GM12878 (cell line): ENCODE measurements at regions of chr9 and their contacts with region 1.

Region 1: GRCh38 chr9:5437254-5438216 is at the start of gene PLGRKT:
- DNase-seq: peak; percentile 81
- ATAC-seq: peak; percentile 88
- H3K4me3 ChIP-seq: peak within 1 kb of the TSS; percentile 86
- H3K27ac ChIP-seq: peak within 1 kb of the TSS; percentile 96
- H3K4me1 ChIP-seq: peaks cover 7% of the 10 kb centered on the region
- H3K27me3 ChIP-seq: no peaks in the 10 kb centered on the region
- CTCF ChIP-seq: peak; percentile 17 to 31 (median 17); a peak in 3 of 6 replicates
- EP300 ChIP-seq: peak in 1 of 2 experiments; percentile 37; a peak in 1 of 4 replicates
- POLR2A ChIP-seq: peak; percentile 95
- RAD21 ChIP-seq: no peak
- polyA plus RNA-seq, gene PLGRKT: 62.2 to 64.4 TPM

Region 2: DNA sequence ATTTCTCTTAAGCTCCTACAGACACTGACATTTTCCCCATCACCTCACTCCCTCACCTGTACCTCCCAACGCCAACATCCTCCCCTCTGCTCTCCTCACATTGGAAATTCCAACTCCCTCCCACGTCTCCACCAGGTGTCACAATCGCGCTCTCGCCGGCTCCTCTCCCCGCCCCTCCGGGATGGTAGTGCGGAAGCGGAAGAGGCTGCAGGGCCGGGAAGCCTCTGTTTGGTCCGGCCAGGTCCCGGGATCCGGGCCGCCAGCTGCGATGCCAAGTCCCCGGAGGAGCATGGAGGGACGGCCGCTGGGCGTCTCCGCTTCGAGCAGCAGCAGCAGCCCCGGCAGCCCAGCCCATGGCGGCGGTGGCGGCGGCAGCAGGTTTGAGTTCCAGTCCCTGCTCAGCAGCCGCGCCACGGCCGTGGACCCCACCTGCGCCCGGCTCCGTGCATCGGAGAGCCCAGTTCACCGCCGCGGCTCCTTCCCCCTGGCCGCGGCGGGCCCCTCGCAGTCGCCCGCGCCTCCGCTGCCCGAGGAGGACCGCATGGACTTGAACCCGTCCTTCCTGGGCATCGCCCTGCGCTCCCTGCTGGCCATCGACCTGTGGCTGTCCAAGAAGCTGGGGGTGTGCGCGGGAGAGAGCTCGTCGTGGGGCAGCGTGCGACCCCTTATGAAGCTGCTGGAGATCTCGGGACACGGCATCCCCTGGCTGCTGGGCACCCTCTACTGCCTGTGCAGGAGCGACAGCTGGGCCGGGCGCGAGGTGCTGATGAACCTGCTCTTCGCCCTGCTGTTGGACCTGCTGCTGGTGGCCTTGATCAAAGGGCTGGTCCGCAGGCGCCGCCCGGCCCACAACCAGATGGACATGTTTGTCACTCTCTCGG is 775.2 kb before region 1 on chr9 and contains the start of gene PLPP6:
- CTCF ChIA-PET with region 1: no interaction called
- POLR2A ChIA-PET with region 1: no interaction called
- RAD21 ChIA-PET with region 1: no interaction called
- SMC1A ChIA-PET with region 1: no interaction called
- in situ Hi-C with region 1: no loop called
- intact Hi-C with region 1: loop called (anchors 10 kb)
- DNase-seq: peak; percentile 52
- ATAC-seq: peak; percentile 91
- H3K4me3 ChIP-seq: peak within 1 kb of the TSS; percentile 85
- H3K27ac ChIP-seq: peak within 1 kb of the TSS; percentile 68
- H3K4me1 ChIP-seq: peaks cover 21% of the 10 kb centered on the region
- H3K27me3 ChIP-seq: no peaks in the 10 kb centered on the region
- CTCF ChIP-seq: peak; percentile 52 to 85 (median 61)
- EP300 ChIP-seq: no peak
- POLR2A ChIP-seq: peak; percentile 90
- RAD21 ChIP-seq: peak; percentile 65
- polyA plus RNA-seq, gene PLPP6: 1.6 to 3.5 TPM

Region 3: GRCh38 chr9:4750023-4750673 is 687.4 kb before region 1 on chr9:
- CTCF ChIA-PET with region 1: interaction called, 8 read pairs
- POLR2A ChIA-PET with region 1: no interaction called
- RAD21 ChIA-PET with region 1: interaction called, 9 read pairs
- SMC1A ChIA-PET with region 1: no interaction called
- in situ Hi-C with region 1: loop called (anchors 5 kb)
- intact Hi-C with region 1: no loop called
- DNase-seq: no peak
- ATAC-seq: peak; percentile 86
- H3K4me3 ChIP-seq: no peak overlapping the region
- H3K27ac ChIP-seq: no peak overlapping the region
- H3K4me1 ChIP-seq: peaks cover 4% of the 10 kb centered on the region; the same call in 1 of the 2 replicates
- H3K27me3 ChIP-seq: no peaks in the 10 kb centered on the region
- CTCF ChIP-seq: peak; percentile 54 to 59 (median 58); a peak in 5 of 6 replicates
- EP300 ChIP-seq: no peak
- POLR2A ChIP-seq: no peak
- RAD21 ChIP-seq: peak; percentile 72

Region 4: DNA sequence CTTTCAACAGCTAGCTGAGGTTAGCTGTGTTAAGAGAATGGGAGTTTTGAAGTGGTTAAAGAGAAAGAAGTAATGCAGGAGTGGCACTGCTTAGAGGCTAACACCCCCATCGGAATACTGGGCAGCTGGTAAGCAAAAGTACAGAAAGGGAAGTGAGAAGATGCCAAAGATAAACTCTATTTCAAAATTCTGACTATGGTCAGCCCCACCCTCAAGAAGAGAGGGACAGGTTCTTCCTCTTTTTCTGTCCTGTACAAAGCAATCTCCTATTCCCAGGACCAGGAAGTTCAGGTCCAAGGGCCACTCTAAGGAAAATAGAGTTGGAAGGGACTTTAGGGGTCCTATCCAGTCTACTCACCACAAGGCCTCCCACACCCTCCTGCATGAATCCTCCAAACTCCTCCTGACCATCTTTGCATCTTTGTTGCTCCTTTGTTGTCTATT is 498.4 kb before region 1 on chr9:
- CTCF ChIA-PET with region 1: no interaction called
- POLR2A ChIA-PET with region 1: no interaction called
- RAD21 ChIA-PET with region 1: no interaction called
- SMC1A ChIA-PET with region 1: interaction called, 3 read pairs
- in situ Hi-C with region 1: no loop called
- intact Hi-C with region 1: loop called (anchors 5 kb)
- DNase-seq: peak; percentile 93
- ATAC-seq: peak; percentile 92
- H3K4me3 ChIP-seq: no peak overlapping the region
- H3K27ac ChIP-seq: peak overlapping the region; percentile 78
- H3K4me1 ChIP-seq: peaks cover 52% of the 10 kb centered on the region
- H3K27me3 ChIP-seq: no peaks in the 10 kb centered on the region
- CTCF ChIP-seq: no peak
- EP300 ChIP-seq: peak; percentile 83 to 86
- POLR2A ChIP-seq: no peak
- RAD21 ChIP-seq: no peak

Region 5: GRCh38 chr9:5364294-5365024 is 73.1 kb before region 1 on chr9:
- CTCF ChIA-PET with region 1: interaction called, 3 read pairs
- POLR2A ChIA-PET with region 1: interaction called, 6 read pairs
- RAD21 ChIA-PET with region 1: interaction called, 5 read pairs
- SMC1A ChIA-PET with region 1: interaction called, 4 read pairs
- in situ Hi-C with region 1: no loop called
- intact Hi-C with region 1: loop called (anchors 5 kb)
- DNase-seq: peak; percentile 51
- ATAC-seq: peak; percentile 96
- H3K4me3 ChIP-seq: no peak overlapping the region
- H3K27ac ChIP-seq: peak overlapping the region; percentile 44
- H3K4me1 ChIP-seq: peaks cover 15% of the 10 kb centered on the region
- H3K27me3 ChIP-seq: no peaks in the 10 kb centered on the region
- CTCF ChIP-seq: no peak
- EP300 ChIP-seq: peak; percentile 63 to 72; a peak in 3 of 4 replicates
- POLR2A ChIP-seq: no peak
- RAD21 ChIP-seq: no peak

Region 6: DNA sequence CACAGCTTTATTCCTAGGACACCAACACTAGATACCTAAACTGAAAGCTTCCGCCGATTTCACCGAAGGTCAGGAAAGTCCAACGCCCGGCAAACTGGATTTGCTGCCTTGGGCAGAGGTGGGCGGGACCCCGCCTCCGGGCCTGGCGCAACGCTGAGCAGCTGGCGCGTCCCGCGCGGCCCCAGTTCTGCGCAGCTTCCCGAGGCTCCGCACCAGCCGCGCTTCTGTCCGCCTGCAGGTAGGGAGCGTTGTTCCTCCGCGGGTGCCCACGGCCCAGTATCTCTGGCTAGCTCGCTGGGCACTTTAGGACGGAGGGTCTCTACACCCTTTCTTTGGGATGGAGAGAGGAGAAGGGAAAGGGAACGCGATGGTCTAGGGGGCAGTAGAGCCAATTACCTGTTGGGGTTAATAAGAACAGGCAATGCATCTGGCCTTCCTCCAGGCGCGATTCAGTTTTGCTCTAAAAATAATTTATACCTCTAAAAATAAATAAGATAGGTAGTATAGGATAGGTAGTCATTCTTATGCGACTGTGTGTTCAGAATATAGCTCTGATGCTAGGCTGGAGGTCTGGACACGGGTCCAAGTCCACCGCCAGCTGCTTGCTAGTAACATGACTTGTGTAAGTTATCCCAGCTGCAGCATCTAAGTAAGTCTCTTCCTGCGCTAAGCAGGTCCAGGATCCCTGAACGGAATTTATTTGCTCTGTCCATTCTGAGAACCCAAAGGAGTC is 13.0 kb after region 1 on chr9 and contains the start of gene CD274:
- CTCF ChIA-PET with region 1: interaction called, 64 read pairs
- POLR2A ChIA-PET with region 1: interaction called, 66 read pairs
- RAD21 ChIA-PET with region 1: interaction called, 86 read pairs
- SMC1A ChIA-PET with region 1: interaction called, 80 read pairs
- in situ Hi-C with region 1: no loop called
- intact Hi-C with region 1: loop called (anchors 1 kb)
- DNase-seq: no peak
- ATAC-seq: peak; percentile 75
- H3K4me3 ChIP-seq: peak within 1 kb of the TSS; percentile 72
- H3K27ac ChIP-seq: peak within 1 kb of the TSS; percentile 97
- H3K4me1 ChIP-seq: peaks cover 46% of the 10 kb centered on the region
- H3K27me3 ChIP-seq: no peaks in the 10 kb centered on the region
- CTCF ChIP-seq: peak; percentile 57 to 86 (median 81)
- EP300 ChIP-seq: 0 out of 4 replicates have a peak, but pooled peaks of 1 of the 2 experiments have one; percentile 33
- POLR2A ChIP-seq: peak; percentile 95
- RAD21 ChIP-seq: peak; percentile 92
- polyA plus RNA-seq, gene CD274: 9.4 to 12.2 TPM

Region 7: DNA sequence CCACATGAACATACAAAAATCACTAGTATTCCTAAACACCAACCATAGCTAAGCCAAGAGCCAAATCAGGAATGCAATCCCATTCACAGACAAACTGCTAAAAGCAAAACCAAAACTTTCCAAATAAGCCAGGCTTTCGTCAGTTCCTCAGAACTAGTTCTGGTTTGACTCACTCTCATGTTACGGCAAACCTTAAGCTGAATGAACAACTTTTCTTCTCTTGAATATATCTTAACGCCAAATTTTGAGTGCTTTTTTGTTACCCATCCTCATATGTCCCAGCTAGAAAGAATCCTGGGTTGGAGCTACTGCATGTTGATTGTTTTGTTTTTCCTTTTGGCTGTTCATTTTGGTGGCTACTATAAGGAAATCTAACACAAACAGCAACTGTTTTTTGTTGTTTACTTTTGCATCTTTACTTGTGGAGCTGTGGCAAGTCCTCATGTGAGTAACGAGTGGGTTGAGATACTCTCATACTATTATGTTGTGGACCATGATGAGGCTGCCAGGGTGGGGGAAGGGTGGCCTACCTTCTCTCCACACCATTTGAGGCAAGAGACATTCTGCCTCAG is 72.9 kb after region 1 on chr9 and contains the start of gene PDCD1LG2:
- CTCF ChIA-PET with region 1: interaction called, 3 read pairs
- POLR2A ChIA-PET with region 1: interaction called, 12 read pairs
- RAD21 ChIA-PET with region 1: interaction called, 11 read pairs
- SMC1A ChIA-PET with region 1: interaction called, 20 read pairs
- in situ Hi-C with region 1: no loop called
- intact Hi-C with region 1: no loop called
- DNase-seq: peak; percentile 76
- ATAC-seq: peak; percentile 71
- H3K4me3 ChIP-seq: peak within 1 kb of the TSS; percentile 49
- H3K27ac ChIP-seq: peak within 1 kb of the TSS; percentile 82
- H3K4me1 ChIP-seq: peaks cover 39% of the 10 kb centered on the region
- H3K27me3 ChIP-seq: no peaks in the 10 kb centered on the region
- CTCF ChIP-seq: no peak
- EP300 ChIP-seq: peak in 1 of 2 experiments; percentile 89; a peak in 2 of 4 replicates
- POLR2A ChIP-seq: no peak
- RAD21 ChIP-seq: no peak
- polyA plus RNA-seq, gene PDCD1LG2: 1.5 to 2.5 TPM